ENCODE measurements at regions of chrX and their contacts with region 1.

Region 1: GRCh38 chrX:49915361-49916222 is 6.8 kb upstream of the CLCN5 start:
- DNase-seq: peak; percentile 43
- H3K4me3 ChIP-seq: no peak overlapping the region
- H3K27ac ChIP-seq: no peak overlapping the region
- H3K4me1 ChIP-seq: no peaks in the 10 kb centered on the region
- H3K27me3 ChIP-seq: peaks cover 5% of the 10 kb centered on the region
- CTCF ChIP-seq: peak; percentile 92 to 96

Region 2: DNA sequence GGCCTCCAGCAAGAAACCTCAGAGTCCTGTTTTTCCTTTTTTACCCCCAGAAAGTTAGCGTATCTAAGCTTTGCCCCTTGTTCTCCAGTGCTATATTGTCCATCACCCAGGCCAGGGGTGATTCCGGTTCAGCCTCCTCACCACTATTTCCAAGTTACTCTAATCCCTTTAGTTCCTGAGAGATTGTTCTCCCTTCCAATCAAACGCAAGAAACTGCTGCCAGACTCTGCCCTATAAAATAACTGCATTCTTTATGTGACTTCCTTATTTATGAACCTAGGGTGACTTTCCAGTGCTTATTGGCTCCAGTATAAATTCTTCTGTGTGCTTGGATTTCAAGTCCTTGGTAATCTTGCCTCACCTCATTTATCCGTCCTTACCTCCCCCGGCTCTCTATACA is 72.6 kb after region 1 on chrX:
- CTCF ChIA-PET with region 1: no interaction called
- dilution Hi-C with region 1: no loop called
- in situ Hi-C with region 1: no loop called
- intact Hi-C with region 1: no loop called
- DNase-seq: no peak
- H3K4me3 ChIP-seq: no peak overlapping the region
- H3K27ac ChIP-seq: no peak overlapping the region
- H3K4me1 ChIP-seq: no peaks in the 10 kb centered on the region
- H3K27me3 ChIP-seq: no peaks in the 10 kb centered on the region
- CTCF ChIP-seq: no peak

Region 3: GRCh38 chrX:50067435-50068284 is 152.1 kb after region 1 on chrX:
- CTCF ChIA-PET with region 1: no interaction called
- dilution Hi-C with region 1: no loop called
- in situ Hi-C with region 1: no loop called
- intact Hi-C with region 1: no loop called
- DNase-seq: peak; percentile 1
- H3K4me3 ChIP-seq: no peak overlapping the region
- H3K27ac ChIP-seq: no peak overlapping the region
- H3K4me1 ChIP-seq: no peaks in the 10 kb centered on the region
- H3K27me3 ChIP-seq: no peaks in the 10 kb centered on the region
- CTCF ChIP-seq: no peak

Region 4: DNA sequence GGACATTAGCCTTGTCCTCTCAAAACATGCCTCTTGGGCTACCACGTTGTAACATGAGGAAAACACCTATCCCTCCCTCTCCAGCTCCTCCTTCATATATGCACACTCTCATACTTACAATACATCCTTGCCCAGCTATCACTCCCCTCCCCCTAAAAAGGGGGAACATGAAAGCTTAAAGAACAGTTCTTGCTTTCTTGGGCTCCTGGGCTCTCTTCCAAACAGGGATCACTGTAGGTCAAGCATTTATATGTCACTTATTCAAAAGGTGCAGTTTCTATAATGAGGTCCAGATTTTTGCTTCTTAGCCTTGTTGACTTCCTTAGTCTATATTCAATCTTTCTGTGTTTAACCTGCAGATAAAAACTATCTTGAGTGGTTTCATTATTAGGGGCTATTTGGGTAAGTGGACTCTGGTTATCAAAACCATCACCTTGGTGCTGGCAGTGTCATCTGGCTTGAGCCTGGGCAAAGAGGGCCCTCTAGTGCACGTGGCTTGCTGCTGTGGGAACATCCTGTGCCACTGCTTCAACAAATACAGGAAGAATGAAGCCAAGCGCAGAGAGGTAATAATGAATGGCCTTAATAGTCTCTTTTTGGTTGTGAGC is 165.8 kb after region 1 on chrX:
- CTCF ChIA-PET with region 1: no interaction called
- dilution Hi-C with region 1: no loop called
- in situ Hi-C with region 1: no loop called
- intact Hi-C with region 1: loop called (anchors 1 kb)
- DNase-seq: no peak
- H3K4me3 ChIP-seq: no peak overlapping the region
- H3K27ac ChIP-seq: no peak overlapping the region
- H3K4me1 ChIP-seq: no peaks in the 10 kb centered on the region
- H3K27me3 ChIP-seq: peaks cover 2% of the 10 kb centered on the region
- CTCF ChIP-seq: peak; percentile 24 to 46

Region 5: GRCh38 chrX:50448565-50448964 is 533.0 kb after region 1 on chrX:
- CTCF ChIA-PET with region 1: no interaction called
- dilution Hi-C with region 1: no loop called
- in situ Hi-C with region 1: no loop called
- intact Hi-C with region 1: loop called (anchors 5 kb)
- DNase-seq: peak; percentile 78
- H3K4me3 ChIP-seq: no peak overlapping the region
- H3K27ac ChIP-seq: no peak overlapping the region
- H3K4me1 ChIP-seq: no peaks in the 10 kb centered on the region
- H3K27me3 ChIP-seq: no peaks in the 10 kb centered on the region
- CTCF ChIP-seq: peak; percentile 57 to 61

Region 6: DNA sequence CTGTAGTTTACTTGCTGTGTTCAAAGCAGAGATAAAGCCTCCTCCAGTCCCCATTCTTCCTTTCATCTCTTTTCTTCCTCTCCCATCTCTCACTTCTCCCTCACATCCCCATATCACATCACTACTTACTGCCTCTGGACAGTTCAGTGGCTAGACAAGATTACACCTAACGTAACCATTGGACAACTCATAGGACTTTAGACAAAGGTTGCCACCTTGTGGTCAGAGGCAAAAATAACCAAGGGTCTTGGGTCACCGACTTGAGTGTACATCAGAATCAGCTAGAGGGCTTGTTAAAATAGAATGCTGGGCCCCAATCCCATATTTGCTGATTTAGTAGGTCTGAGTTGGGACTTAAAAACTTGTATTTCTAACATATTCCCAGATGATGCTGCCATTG is 664.4 kb after region 1 on chrX:
- CTCF ChIA-PET with region 1: no interaction called
- dilution Hi-C with region 1: no loop called
- in situ Hi-C with region 1: loop called (anchors 25 kb)
- intact Hi-C with region 1: loop called (anchors 1 kb)
- DNase-seq: peak; percentile 53
- H3K4me3 ChIP-seq: no peak overlapping the region
- H3K27ac ChIP-seq: no peak overlapping the region
- H3K4me1 ChIP-seq: no peaks in the 10 kb centered on the region
- H3K27me3 ChIP-seq: peaks cover 2% of the 10 kb centered on the region
- CTCF ChIP-seq: peak; percentile 63 to 68

Region 7: GRCh38 chrX:50680990-50681389 is 765.4 kb after region 1 on chrX:
- CTCF ChIA-PET with region 1: no interaction called
- dilution Hi-C with region 1: no loop called
- in situ Hi-C with region 1: no loop called
- intact Hi-C with region 1: loop called (anchors 10 kb)
- DNase-seq: peak; percentile 12
- H3K4me3 ChIP-seq: no peak overlapping the region
- H3K27ac ChIP-seq: no peak overlapping the region
- H3K4me1 ChIP-seq: no peaks in the 10 kb centered on the region
- H3K27me3 ChIP-seq: peaks cover 10% of the 10 kb centered on the region
- CTCF ChIP-seq: peak; percentile 56 to 63

Measured in mammary epithelial cell (primary cell).